Activated CD4-positive, alpha-beta memory T cell treated with anti-CD3 and anti-CD28 coated beads for 36 hours (primary cell): ENCODE measurements at regions of chr12 and their contacts with region 1.

Region 1: DNA sequence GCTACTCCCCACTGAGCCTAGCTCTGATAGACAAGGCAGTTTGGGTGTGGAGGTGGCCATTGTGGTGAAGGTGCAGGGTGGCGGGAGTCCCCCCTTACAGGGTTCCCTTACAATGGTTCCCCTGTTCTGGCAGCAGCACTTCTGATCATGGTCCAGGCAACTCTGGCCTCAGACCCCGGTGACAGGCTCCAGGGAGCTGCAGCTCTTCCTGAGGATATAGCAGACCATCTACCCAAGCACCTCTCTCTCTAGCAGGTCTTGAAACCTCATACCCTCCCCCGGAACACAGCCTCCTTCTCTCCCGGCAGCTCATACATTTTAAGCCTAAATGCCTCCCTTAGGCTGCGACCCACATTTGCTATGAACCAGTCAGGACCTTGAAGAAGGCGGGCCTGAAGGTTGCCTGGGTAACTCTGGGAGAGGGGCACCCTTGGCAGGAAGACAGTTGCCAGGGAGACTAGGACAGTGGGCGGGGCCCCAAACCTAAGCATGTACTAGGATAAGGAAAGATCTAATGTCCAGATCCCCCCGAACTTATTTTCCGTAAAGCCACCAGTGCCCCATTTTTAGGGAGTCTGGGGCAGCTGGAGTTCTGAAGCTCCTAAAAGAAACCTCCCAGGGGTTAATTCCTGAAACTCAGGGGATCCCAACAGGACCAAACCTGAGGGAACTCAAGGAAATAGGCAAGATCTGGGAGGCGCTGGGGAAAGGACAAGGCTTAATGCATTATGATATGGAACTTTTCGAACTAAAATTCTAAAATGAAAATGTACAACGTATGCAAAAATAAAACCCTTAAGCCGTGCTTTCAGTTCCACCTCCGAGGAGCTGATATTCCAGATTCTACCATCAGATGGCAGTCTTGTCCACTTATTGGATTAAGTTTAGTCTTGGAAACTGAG is 4.5 kb upstream of the GDF11 start:
- DNase-seq: peak; percentile 87
- H3K4me3 Mint-ChIP-seq: peak overlapping the region; percentile 77
- H3K27ac Mint-ChIP-seq: peak overlapping the region; percentile 85
- H3K4me1 Mint-ChIP-seq: peaks cover 21% of the 10 kb centered on the region
- H3K27me3 Mint-ChIP-seq: no peaks in the 10 kb centered on the region

Region 2: DNA sequence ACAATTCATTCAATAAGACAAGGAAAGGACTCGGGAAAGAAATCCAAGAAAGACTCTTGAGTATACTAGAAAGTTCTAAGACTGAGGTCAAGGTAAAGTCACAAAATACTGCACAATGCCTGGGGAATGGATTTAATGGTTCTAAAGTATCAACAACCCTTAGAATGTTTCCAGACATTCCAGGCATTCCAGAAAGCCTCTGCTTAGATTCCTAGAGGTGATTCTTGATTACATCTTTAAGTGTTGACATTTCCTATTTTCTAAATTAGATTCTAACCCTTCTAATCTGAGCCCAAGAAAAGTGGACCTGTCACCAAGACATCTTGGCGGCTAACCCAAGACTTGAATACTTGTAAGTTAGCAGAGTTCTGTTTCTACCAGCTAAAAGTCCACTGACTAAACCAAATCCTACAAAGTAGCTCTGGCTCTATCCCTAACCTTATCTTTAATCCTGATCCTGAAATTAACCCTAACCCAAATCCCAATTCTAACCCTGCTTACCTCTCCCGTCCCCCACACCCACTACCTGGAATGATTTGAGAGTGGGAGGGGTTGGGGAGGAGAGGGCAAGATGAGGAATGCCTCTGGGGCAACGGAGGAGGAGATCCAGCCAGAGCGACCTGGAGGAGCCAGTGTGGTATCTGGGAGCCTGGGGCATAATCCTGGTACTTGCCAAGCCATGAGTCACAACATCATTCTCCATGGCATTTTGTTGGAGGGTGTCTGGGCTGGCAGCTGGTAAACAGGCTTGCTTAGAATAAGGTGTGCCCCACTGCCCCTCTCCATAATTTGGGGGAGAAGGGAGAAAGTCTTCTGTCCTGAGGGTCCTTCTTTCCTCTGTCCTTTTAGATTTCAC is 1893.2 kb before region 1 on chr12:
- CTCF ChIA-PET with region 1: no interaction called
- POLR2A ChIA-PET with region 1: no interaction called
- intact Hi-C with region 1: no loop called
- DNase-seq: no peak
- H3K4me3 Mint-ChIP-seq: no peak overlapping the region
- H3K27ac Mint-ChIP-seq: no peak overlapping the region
- H3K4me1 Mint-ChIP-seq: no peaks in the 10 kb centered on the region
- H3K27me3 Mint-ChIP-seq: peaks cover 50% of the 10 kb centered on the region

Region 3: DNA sequence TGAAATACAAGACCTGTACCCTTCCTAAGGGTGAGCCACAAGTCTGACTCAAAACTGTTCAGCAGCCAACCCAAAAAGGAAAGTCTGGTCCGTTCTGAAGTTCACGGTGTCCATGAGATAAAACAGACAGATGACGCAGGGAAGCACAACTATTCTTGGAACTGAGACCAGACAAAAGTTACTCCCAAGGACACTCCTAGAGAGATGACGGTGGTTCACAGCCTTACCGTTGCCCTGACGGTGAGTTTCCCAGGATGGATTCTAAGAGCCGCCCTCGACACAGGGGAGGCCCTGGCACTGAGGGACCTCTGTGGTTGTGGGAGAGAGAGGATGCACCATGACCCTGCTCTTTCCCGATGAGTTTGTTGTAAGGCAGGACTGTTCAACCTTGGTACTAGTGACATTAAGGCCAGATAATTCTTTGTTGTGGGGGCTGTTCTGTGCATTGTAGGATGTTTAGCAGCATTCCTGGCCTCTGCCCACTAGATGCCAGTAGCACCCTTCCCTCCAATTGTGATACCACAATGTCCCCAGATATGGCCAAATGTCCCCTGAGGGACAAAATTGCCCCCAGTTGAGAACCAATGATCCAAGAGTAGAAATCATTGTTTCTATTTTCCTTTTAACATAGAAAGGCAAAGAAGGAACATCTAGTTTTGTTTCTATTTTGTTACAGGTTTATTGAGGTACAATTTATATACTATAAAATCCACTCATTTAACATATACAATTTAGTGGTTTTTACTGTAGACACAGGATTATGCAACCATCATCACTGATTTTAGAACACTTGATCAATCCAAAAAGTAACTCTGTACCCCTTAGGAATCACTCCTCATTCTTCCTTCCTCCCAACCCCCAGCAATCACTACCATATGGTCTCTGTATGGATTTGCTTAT is 78.6 kb before region 1 on chr12:
- CTCF ChIA-PET with region 1: interaction called, 12 read pairs
- POLR2A ChIA-PET with region 1: no interaction called
- intact Hi-C with region 1: loop called (anchors 5 kb)
- DNase-seq: peak; percentile 30
- H3K4me3 Mint-ChIP-seq: no peak overlapping the region
- H3K27ac Mint-ChIP-seq: no peak overlapping the region
- H3K4me1 Mint-ChIP-seq: no peaks in the 10 kb centered on the region
- H3K27me3 Mint-ChIP-seq: no peaks in the 10 kb centered on the region

Region 4: DNA sequence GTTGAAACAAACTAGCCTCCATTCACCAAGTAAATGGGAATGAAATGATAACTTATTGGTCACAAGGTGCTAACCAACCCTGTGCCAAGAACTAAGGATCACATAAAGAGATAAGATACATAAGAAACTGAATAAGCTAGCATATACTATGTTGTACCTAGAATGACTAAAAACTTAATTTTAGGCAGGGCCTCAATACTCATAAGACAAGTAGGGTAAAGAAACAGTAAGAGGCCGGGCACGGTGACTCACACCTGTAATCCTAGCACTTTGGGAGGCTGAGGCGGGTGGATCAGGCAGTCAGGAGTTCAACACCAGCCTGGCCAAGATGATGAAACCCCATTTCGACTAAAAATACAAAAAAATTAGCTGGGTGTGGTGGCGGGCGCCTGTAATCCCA is 22.3 kb after region 1 on chr12:
- CTCF ChIA-PET with region 1: interaction called, 38 read pairs
- POLR2A ChIA-PET with region 1: no interaction called
- intact Hi-C with region 1: loop called (anchors 2 kb)
- DNase-seq: peak; percentile 85
- H3K4me3 Mint-ChIP-seq: no peak overlapping the region
- H3K27ac Mint-ChIP-seq: peak overlapping the region; percentile 95
- H3K4me1 Mint-ChIP-seq: peaks cover 20% of the 10 kb centered on the region
- H3K27me3 Mint-ChIP-seq: no peaks in the 10 kb centered on the region

Region 5: GRCh38 chr12:55823419-55823818 is 85.0 kb after region 1 on chr12:
- CTCF ChIA-PET with region 1: interaction called, 46 read pairs
- POLR2A ChIA-PET with region 1: interaction called, 12 read pairs
- intact Hi-C with region 1: no loop called
- DNase-seq: no peak
- H3K4me3 Mint-ChIP-seq: no peak overlapping the region
- H3K27ac Mint-ChIP-seq: peak overlapping the region; percentile 92
- H3K4me1 Mint-ChIP-seq: peaks cover 58% of the 10 kb centered on the region
- H3K27me3 Mint-ChIP-seq: no peaks in the 10 kb centered on the region

Region 6: GRCh38 chr12:55940065-55940732 is 201.8 kb after region 1 on chr12:
- CTCF ChIA-PET with region 1: interaction called, 130 read pairs
- POLR2A ChIA-PET with region 1: interaction called, 4 read pairs
- intact Hi-C with region 1: no loop called
- DNase-seq: peak; percentile 89
- H3K4me3 Mint-ChIP-seq: no peak overlapping the region
- H3K27ac Mint-ChIP-seq: peak overlapping the region; percentile 55
- H3K4me1 Mint-ChIP-seq: peaks cover 78% of the 10 kb centered on the region
- H3K27me3 Mint-ChIP-seq: no peaks in the 10 kb centered on the region

Region 7: DNA sequence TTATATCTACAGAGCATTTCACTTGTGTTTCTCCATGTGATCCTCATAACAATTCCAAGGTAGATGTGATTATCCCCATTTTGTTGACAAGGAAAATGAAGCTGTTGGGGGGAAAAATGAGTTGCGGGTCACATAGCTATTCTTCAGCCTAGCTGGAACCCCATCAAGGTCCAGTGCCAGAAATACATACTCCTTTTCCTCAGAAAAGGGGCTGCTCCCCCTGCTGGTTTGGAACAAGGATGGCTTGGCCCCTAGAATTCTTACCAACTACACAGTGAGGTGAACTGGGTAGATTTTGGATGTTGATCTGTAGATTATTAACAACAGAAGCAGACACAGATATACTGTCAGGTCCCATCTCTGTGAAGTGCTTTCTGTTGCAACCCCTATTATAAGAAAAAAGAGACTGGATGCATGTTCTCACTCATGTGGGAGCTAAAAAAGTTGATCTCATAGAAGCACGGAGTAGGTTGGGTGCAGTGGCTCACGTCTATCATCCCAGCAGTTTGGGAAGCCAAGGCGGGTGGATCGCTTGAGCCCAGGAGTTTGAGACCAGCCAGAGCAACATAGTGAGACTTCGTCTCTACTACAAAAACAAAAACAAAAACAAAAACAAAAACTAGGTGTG is 291.4 kb after region 1 on chr12:
- CTCF ChIA-PET with region 1: interaction called, 20 read pairs
- POLR2A ChIA-PET with region 1: no interaction called
- intact Hi-C with region 1: no loop called
- DNase-seq: peak; percentile 54
- H3K4me3 Mint-ChIP-seq: no peak overlapping the region
- H3K27ac Mint-ChIP-seq: no peak overlapping the region
- H3K4me1 Mint-ChIP-seq: peaks cover 19% of the 10 kb centered on the region
- H3K27me3 Mint-ChIP-seq: no peaks in the 10 kb centered on the region

Region 8: GRCh38 chr12:56189176-56189917 is 451.0 kb after region 1 on chr12 and contains the start of gene SMARCC2:
- CTCF ChIA-PET with region 1: interaction called, 19 read pairs
- POLR2A ChIA-PET with region 1: interaction called, 3 read pairs
- intact Hi-C with region 1: no loop called
- DNase-seq: peak; percentile 92
- H3K4me3 Mint-ChIP-seq: peak within 1 kb of the TSS; percentile 87
- H3K27ac Mint-ChIP-seq: peak within 1 kb of the TSS; percentile 95
- H3K4me1 Mint-ChIP-seq: peaks cover 35% of the 10 kb centered on the region
- H3K27me3 Mint-ChIP-seq: no peaks in the 10 kb centered on the region
- total RNA-seq, gene SMARCC2: 96.4 to 103 TPM